GM12878 (cell line): ENCODE measurements at regions of chr16 and their contacts with region 1.

Region 1: GRCh38 chr16:84504420-84505248 is at the start of gene MEAK7:
- DNase-seq: peak; percentile 86
- ATAC-seq: peak; percentile 91
- H3K4me3 ChIP-seq: peak within 1 kb of the TSS; percentile 88
- H3K27ac ChIP-seq: peak within 1 kb of the TSS; percentile 82
- H3K4me1 ChIP-seq: peaks cover 50% of the 10 kb centered on the region
- H3K27me3 ChIP-seq: no peaks in the 10 kb centered on the region
- CTCF ChIP-seq: peak in 1 of 3 experiments; percentile 13; a peak in 1 of 6 replicates
- EP300 ChIP-seq: no peak
- POLR2A ChIP-seq: peak; percentile 78
- RAD21 ChIP-seq: no peak
- polyA plus RNA-seq, gene MEAK7: 1.4 to 1.5 TPM

Region 2: DNA sequence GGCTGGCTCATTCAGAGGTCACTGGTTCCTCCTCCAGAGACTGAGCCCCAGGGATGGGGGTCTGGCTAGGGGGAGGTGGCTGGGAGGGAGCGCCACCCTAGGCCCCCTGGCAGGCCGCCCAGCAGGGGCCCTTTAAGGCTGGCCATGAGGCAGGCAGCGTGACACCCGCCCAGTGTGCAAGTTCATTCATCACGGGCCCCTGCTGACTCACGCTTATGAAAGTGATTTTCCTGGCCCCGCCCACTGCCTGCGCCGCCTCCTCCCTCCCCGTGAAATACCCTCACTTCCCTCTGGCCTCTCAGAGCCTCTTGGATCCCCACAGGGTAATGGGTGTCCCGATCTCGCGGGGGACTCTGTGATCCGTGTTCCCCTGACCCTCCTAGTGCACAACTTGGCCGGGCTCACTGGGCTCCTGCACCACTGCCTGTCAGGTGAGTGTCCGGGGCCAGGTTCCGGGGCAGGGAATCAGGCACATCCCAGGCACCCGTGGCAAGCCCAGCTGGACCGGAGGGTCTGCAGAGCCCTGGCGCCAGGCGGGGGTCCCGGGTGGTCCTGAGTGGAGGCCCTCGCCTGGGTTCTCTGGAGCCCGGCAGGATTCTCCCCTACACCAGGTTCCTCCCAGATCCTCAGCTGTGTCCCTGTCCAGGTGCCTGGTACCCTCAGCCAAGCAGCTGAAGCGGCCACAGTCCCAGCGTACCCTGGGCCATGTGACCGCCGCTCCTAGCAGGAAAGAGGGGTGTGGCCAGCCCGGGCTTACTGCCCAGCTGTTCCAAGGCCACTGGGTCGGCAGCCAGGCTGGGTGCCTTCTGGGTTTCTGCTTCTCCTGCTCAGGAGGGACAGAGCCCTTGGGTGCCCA is 551.5 kb before region 1 on chr16 and contains the start of gene OSGIN1:
- CTCF ChIA-PET with region 1: interaction called, 3 read pairs
- POLR2A ChIA-PET with region 1: interaction called, 3 read pairs
- RAD21 ChIA-PET with region 1: interaction called, 4 read pairs
- SMC1A ChIA-PET with region 1: interaction called, 3 read pairs
- in situ Hi-C with region 1: no loop called
- intact Hi-C with region 1: loop called (anchors 10 kb)
- DNase-seq: peak; percentile 25
- ATAC-seq: peak; percentile 91
- H3K4me3 ChIP-seq: 0 out of 2 replicates have a peak within 1 kb of the TSS, but pooled peaks have one; percentile 16
- H3K27ac ChIP-seq: no peak within 1 kb of the TSS
- H3K4me1 ChIP-seq: peaks cover 3% of the 10 kb centered on the region; the same call in 1 of the 2 replicates
- H3K27me3 ChIP-seq: no peaks in the 10 kb centered on the region
- CTCF ChIP-seq: no peak
- EP300 ChIP-seq: no peak
- POLR2A ChIP-seq: peak; percentile 57
- RAD21 ChIP-seq: no peak
- polyA plus RNA-seq, gene OSGIN1: not detected

Region 3: GRCh38 chr16:84277237-84277823 is 227.3 kb before region 1 on chr16:
- CTCF ChIA-PET with region 1: interaction called, 63 read pairs
- POLR2A ChIA-PET with region 1: interaction called, 4 read pairs
- RAD21 ChIA-PET with region 1: interaction called, 4 read pairs
- SMC1A ChIA-PET with region 1: interaction called, 19 read pairs
- in situ Hi-C with region 1: no loop called
- intact Hi-C with region 1: loop called (anchors 1 kb)
- DNase-seq: no peak
- ATAC-seq: peak; percentile 92
- H3K4me3 ChIP-seq: no peak overlapping the region
- H3K27ac ChIP-seq: no peak overlapping the region
- H3K4me1 ChIP-seq: no peaks in the 10 kb centered on the region
- H3K27me3 ChIP-seq: peaks cover 0 to 2% of the 10 kb centered on the region in 2 experiments; a peak in 2 of 4 replicates
- CTCF ChIP-seq: peak; percentile 69 to 82 (median 72)
- EP300 ChIP-seq: no peak
- POLR2A ChIP-seq: no peak
- RAD21 ChIP-seq: peak; percentile 69

Region 4: DNA sequence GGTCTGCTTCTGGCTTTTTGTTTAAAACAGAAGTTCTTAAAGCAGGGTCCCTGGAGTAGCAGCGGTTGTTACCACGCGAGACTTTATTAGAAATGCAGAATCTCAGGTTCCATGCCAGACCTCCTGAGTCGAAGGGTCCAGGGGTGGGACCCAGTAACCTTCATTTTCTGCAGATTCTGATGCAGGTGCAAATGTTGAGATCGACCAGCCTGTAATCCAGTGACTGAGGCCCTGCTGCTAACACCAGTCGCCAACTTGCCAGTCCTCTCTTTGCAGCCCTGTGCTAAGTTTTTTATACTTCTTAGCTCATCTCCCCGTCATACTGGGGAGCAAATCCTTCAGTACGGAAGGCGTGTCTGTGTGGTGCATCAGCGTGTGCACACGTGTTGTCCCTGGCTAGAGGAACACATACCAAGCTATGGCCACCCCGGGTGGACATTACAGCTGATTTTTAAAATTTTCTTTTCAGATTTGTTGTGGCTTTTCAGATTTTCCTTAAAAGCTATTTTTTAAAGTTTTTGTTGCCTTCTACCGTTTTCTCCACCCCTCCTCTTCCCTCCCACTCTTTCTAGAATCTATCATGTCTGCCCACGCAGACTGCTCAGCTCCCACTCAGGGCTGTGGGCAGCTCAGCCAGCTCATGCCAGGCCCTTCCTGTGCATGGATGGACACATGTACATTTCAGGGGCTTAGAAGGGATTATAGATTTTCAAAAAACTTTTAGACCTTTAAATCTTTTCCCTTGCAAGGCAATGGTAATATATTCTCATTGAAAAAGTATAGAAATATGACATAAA is 57.8 kb before region 1 on chr16:
- CTCF ChIA-PET with region 1: no interaction called
- POLR2A ChIA-PET with region 1: no interaction called
- RAD21 ChIA-PET with region 1: no interaction called
- SMC1A ChIA-PET with region 1: no interaction called
- in situ Hi-C with region 1: no loop called
- intact Hi-C with region 1: no loop called
- DNase-seq: no peak
- ATAC-seq: no peak
- H3K4me3 ChIP-seq: no peak overlapping the region
- H3K27ac ChIP-seq: no peak overlapping the region
- H3K4me1 ChIP-seq: no peaks in the 10 kb centered on the region
- H3K27me3 ChIP-seq: peaks cover 0 to 5% of the 10 kb centered on the region in 2 experiments; a peak in 1 of 4 replicates
- CTCF ChIP-seq: no peak
- EP300 ChIP-seq: no peak
- POLR2A ChIP-seq: no peak
- RAD21 ChIP-seq: no peak

Region 5: DNA sequence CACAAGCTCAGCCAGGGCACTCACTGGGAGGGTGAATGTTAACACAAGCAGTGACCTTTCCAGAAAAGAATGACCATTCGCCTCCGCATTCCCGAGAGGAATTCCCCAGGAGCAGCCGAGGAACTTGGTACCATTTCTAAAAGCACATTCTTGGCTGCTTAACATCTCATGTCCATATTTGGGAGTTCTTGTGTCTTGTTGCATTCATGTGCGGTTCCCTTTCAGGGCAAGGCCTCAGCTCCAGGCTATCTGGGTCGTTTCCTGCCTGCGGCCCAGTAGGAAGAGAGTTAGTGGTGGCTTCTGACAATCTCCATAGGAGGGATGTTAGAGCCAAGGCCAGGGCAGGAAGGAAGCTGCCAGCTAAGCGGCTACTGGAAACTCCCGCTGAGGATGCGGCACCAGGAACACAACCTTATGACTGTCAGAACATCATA is 27.7 kb after region 1 on chr16:
- CTCF ChIA-PET with region 1: no interaction called
- POLR2A ChIA-PET with region 1: no interaction called
- RAD21 ChIA-PET with region 1: no interaction called
- SMC1A ChIA-PET with region 1: no interaction called
- in situ Hi-C with region 1: no loop called
- intact Hi-C with region 1: no loop called
- DNase-seq: no peak
- ATAC-seq: no peak
- H3K4me3 ChIP-seq: no peak overlapping the region
- H3K27ac ChIP-seq: no peak overlapping the region
- H3K4me1 ChIP-seq: peaks cover 6% of the 10 kb centered on the region
- H3K27me3 ChIP-seq: no peaks in the 10 kb centered on the region
- CTCF ChIP-seq: no peak
- EP300 ChIP-seq: no peak
- POLR2A ChIP-seq: no peak
- RAD21 ChIP-seq: no peak

Region 6: GRCh38 chr16:84599521-84600202 is 95.0 kb after region 1 on chr16:
- CTCF ChIA-PET with region 1: interaction called, 18 read pairs
- POLR2A ChIA-PET with region 1: interaction called, 4 read pairs
- RAD21 ChIA-PET with region 1: interaction called, 38 read pairs
- SMC1A ChIA-PET with region 1: interaction called, 30 read pairs
- in situ Hi-C with region 1: no loop called
- intact Hi-C with region 1: no loop called
- DNase-seq: no peak
- ATAC-seq: peak; percentile 35
- H3K4me3 ChIP-seq: peak overlapping the region; percentile 69
- H3K27ac ChIP-seq: peak overlapping the region; percentile 100
- H3K4me1 ChIP-seq: peaks cover 79% of the 10 kb centered on the region
- H3K27me3 ChIP-seq: no peaks in the 10 kb centered on the region
- CTCF ChIP-seq: no peak
- EP300 ChIP-seq: peak in 1 of 2 experiments; percentile 18; a peak in 1 of 4 replicates
- POLR2A ChIP-seq: peak; percentile 64
- RAD21 ChIP-seq: no peak

Region 7: DNA sequence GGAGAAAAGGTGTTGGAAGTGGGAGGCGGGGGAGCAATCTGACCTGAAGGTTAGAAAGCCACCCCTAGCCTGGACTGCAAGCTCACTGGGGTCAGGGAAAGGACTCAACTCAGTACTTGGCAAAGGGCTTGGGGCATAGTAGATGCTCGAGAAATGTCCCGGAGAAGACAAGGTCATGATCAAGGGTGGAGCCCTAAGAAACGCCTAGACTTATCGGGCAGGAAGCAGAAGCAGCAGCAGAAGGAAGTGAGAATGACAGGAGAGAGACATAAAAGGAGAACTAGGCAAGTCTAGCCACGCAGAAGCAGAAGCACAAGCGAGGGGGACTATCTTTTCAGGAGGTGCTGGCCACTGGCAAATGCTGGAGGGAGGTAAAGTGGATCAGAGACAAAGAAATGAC is 103.1 kb after region 1 on chr16:
- CTCF ChIA-PET with region 1: interaction called, 10 read pairs
- POLR2A ChIA-PET with region 1: interaction called, 4 read pairs
- RAD21 ChIA-PET with region 1: interaction called, 3 read pairs
- SMC1A ChIA-PET with region 1: interaction called, 30 read pairs
- in situ Hi-C with region 1: no loop called
- intact Hi-C with region 1: no loop called
- DNase-seq: no peak
- ATAC-seq: peak; percentile 62
- H3K4me3 ChIP-seq: peak overlapping the region; percentile 43
- H3K27ac ChIP-seq: peak overlapping the region; percentile 63
- H3K4me1 ChIP-seq: peaks cover 60% of the 10 kb centered on the region
- H3K27me3 ChIP-seq: no peaks in the 10 kb centered on the region
- CTCF ChIP-seq: no peak
- EP300 ChIP-seq: peak; percentile 47 to 54; a peak in 2 of 4 replicates
- POLR2A ChIP-seq: peak; percentile 62; the same call in 1 of the 2 replicates
- RAD21 ChIP-seq: no peak

Region 8: GRCh38 chr16:84952335-84953189 is 447.9 kb after region 1 on chr16:
- CTCF ChIA-PET with region 1: no interaction called
- POLR2A ChIA-PET with region 1: no interaction called
- RAD21 ChIA-PET with region 1: no interaction called
- SMC1A ChIA-PET with region 1: no interaction called
- in situ Hi-C with region 1: loop called (anchors 25 kb)
- intact Hi-C with region 1: no loop called
- DNase-seq: peak; percentile 40
- ATAC-seq: peak; percentile 94
- H3K4me3 ChIP-seq: no peak overlapping the region
- H3K27ac ChIP-seq: no peak overlapping the region
- H3K4me1 ChIP-seq: peaks cover 4% of the 10 kb centered on the region; the same call in 1 of the 2 replicates
- H3K27me3 ChIP-seq: no peaks in the 10 kb centered on the region; a peak in 1 of 4 replicates
- CTCF ChIP-seq: peak; percentile 85
- EP300 ChIP-seq: no peak
- POLR2A ChIP-seq: no peak
- RAD21 ChIP-seq: peak; percentile 58